Activated T-helper 2 cell treated with anti-CD3 and anti-CD28 coated beads, Interferon-gamma antibody, Interleukin-2, Interleukin-4, amounts not matched to agents 10 μg/mL and 5 μg/mL and 100 μg/mL, durations not matched to agents 14 hours and 24 hours and 36 hours (primary cell): ENCODE measurements at regions of chrX and their contacts with region 1.

Region 1: DNA sequence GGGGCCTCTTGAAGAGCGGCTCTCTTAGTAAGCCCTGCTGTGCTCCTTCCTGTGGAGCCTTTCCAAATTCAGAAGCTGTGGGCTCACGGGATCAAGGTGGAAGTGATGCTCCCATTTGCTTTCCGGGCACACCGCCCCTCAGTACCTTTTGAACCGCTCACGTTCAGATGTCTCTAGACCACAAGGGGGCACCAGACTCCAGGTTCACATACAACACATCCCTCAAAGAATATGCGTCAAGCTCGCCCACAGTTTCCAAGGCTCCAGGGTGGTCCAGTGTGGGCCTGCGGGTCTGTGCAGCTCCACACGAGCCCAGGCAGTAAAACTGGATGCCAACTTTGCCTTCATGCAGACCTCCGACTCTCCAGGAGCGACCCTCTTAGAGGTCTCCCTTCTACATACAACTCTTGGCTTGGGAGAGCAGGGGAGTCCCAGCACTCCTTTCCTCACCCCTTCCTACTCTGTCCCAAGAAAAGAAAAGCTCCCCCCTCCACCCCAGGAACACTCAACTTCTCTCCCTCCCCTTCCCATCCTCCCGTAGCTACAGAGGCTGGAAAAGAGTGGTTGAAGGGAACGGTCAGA is 11.0 kb downstream of the SUPT20HL1 start:
- DNase-seq: peak; percentile 28
- H3K4me3 Mint-ChIP-seq: peak overlapping the region; percentile 45
- H3K27ac Mint-ChIP-seq: no peak overlapping the region
- H3K4me1 Mint-ChIP-seq: peaks cover 10% of the 10 kb centered on the region
- H3K27me3 Mint-ChIP-seq: peaks cover 5% of the 10 kb centered on the region

Region 2: DNA sequence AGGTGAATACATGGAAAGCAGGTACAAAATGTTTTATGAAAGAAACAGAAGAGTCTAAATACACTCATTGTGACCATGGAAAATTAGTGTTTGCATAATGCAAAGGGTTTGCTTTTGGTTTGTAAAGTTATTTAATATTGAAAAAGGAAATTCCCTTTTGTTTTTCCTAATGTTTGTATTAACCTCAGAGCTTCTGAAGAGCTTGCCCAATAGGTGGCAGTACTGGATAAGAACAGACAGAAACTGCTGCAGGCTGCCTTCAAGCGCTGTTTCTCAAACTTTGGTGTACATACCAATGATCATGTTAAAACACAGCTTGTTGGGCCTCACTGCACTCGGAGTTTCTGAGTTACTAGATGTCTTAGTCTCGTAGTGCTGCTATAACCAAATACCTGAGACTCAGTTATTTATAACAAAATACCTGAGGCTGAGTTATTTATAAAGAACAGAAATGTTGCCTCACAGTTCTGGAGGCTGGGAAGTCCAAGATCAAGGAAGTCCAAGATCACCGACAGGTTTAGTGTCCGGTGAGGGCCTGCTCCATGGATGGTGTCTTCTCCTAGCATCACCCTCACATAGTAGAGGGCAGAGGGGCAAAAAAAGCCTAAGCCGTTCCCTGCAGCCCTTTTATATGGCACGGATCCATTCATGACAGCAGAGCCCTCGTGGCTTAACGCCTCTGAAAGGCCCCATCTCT is 111.8 kb before region 1 on chrX:
- intact Hi-C with region 1: loop called (anchors 1 kb)
- DNase-seq: no peak
- H3K4me3 Mint-ChIP-seq: no peak overlapping the region
- H3K27ac Mint-ChIP-seq: no peak overlapping the region
- H3K4me1 Mint-ChIP-seq: peaks cover 13% of the 10 kb centered on the region
- H3K27me3 Mint-ChIP-seq: no peaks in the 10 kb centered on the region

Region 3: DNA sequence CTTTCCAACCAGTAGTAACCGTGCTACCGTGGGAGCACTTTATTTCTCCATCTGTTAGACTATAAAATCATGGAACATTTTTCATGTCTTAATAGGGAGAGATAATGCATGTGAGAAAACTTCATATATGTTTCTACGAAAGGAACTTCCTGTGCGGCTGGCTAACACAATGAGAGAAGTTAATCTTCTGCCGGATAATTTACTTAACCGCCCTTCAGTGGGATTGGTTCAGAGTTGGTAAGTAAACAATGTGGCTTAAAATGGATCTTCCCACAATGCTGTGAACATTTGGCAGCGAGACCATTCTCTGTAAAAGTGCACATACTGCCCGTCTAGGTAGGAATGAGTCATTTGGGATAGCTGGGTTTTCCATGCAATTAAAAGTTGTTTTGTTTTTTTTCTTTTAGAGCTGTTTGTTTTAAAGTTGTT is 123.2 kb after region 1 on chrX:
- intact Hi-C with region 1: no loop called
- DNase-seq: no peak
- H3K4me3 Mint-ChIP-seq: no peak overlapping the region
- H3K27ac Mint-ChIP-seq: peak overlapping the region; percentile 16
- H3K4me1 Mint-ChIP-seq: peaks cover 25% of the 10 kb centered on the region
- H3K27me3 Mint-ChIP-seq: no peaks in the 10 kb centered on the region